ENCODE measurements at regions of chr19 and their contacts with region 1.

Region 1: GRCh38 chr19:58519355-58520256 is at the start of gene ZBTB45:
- DNase-seq: peak; percentile 90
- ATAC-seq: peak; percentile 84
- H3K4me3 ChIP-seq: peak within 1 kb of the TSS; percentile 78 to 94 (median 90)
- H3K27ac ChIP-seq: peak within 1 kb of the TSS; percentile 88
- H3K4me1 ChIP-seq: peaks cover 28% of the 10 kb centered on the region
- H3K27me3 ChIP-seq: no peaks in the 10 kb centered on the region; a peak in 1 of 5 replicates
- CTCF ChIP-seq: peak; percentile 96
- EP300 ChIP-seq: peak in 1 of 2 experiments; percentile 62; a peak in 2 of 4 replicates
- POLR2A ChIP-seq: peak; percentile 64 to 80; a peak in 3 of 4 replicates
- RAD21 ChIP-seq: peak; percentile 86
- total RNA-seq, gene ZBTB45: 2.0 and 3.7 TPM in 2 replicates

Region 2: GRCh38 chr19:58326914-58327726 is 192.5 kb before region 1 on chr19 and contains the start of gene ZSCAN22:
- CTCF ChIA-PET with region 1: interaction called, 4 read pairs
- POLR2A ChIA-PET with region 1: interaction called, 14 read pairs
- in situ Hi-C with region 1: no loop called
- intact Hi-C with region 1: loop called (anchors 5 kb)
- DNase-seq: peak; percentile 93
- ATAC-seq: peak; percentile 95
- H3K4me3 ChIP-seq: peak within 1 kb of the TSS; percentile 83 to 95 (median 89)
- H3K27ac ChIP-seq: peak within 1 kb of the TSS; percentile 78
- H3K4me1 ChIP-seq: peaks cover 41% of the 10 kb centered on the region
- H3K27me3 ChIP-seq: no peaks in the 10 kb centered on the region; a peak in 1 of 5 replicates
- CTCF ChIP-seq: peak; percentile 9; the same call in 1 of the 2 replicates
- EP300 ChIP-seq: peak in 1 of 2 experiments; percentile 40; a peak in 1 of 4 replicates
- POLR2A ChIP-seq: peak; percentile 59 to 75
- RAD21 ChIP-seq: peak; percentile 54; the same call in 1 of the 2 replicates
- total RNA-seq, gene ZSCAN22: 2.5 and 3.1 TPM in 2 replicates

Region 3: GRCh38 chr19:58355908-58356765 is 163.5 kb before region 1 on chr19:
- CTCF ChIA-PET with region 1: no interaction called
- POLR2A ChIA-PET with region 1: no interaction called
- in situ Hi-C with region 1: no loop called
- intact Hi-C with region 1: no loop called
- DNase-seq: no peak
- ATAC-seq: no peak
- H3K4me3 ChIP-seq: no peak overlapping the region
- H3K27ac ChIP-seq: no peak overlapping the region
- H3K4me1 ChIP-seq: peaks cover 41% of the 10 kb centered on the region
- H3K27me3 ChIP-seq: no peaks in the 10 kb centered on the region
- CTCF ChIP-seq: no peak
- EP300 ChIP-seq: no peak
- POLR2A ChIP-seq: no peak
- RAD21 ChIP-seq: no peak

Region 4: GRCh38 chr19:58499021-58499927 is 20.3 kb before region 1 on chr19:
- CTCF ChIA-PET with region 1: no interaction called
- POLR2A ChIA-PET with region 1: interaction called, 44 read pairs
- in situ Hi-C with region 1: no loop called
- intact Hi-C with region 1: loop called (anchors 2 kb)
- DNase-seq: peak; percentile 98
- ATAC-seq: peak; percentile 96
- H3K4me3 ChIP-seq: peak overlapping the region; percentile 60 to 87 (median 77)
- H3K27ac ChIP-seq: peak overlapping the region; percentile 68
- H3K4me1 ChIP-seq: peaks cover 37% of the 10 kb centered on the region
- H3K27me3 ChIP-seq: no peaks in the 10 kb centered on the region; a peak in 1 of 5 replicates
- CTCF ChIP-seq: peak; percentile 67
- EP300 ChIP-seq: peak; percentile 15 to 59; a peak in 1 of 4 replicates
- POLR2A ChIP-seq: peak; percentile 14 to 68
- RAD21 ChIP-seq: peak; percentile 71

Region 5: GRCh38 chr19:58543826-58544590 is 24.4 kb after region 1 on chr19 and contains the start of gene TRIM28:
- CTCF ChIA-PET with region 1: no interaction called
- POLR2A ChIA-PET with region 1: interaction called, 59 read pairs
- in situ Hi-C with region 1: no loop called
- intact Hi-C with region 1: no loop called
- DNase-seq: peak; percentile 96
- ATAC-seq: peak; percentile 92
- H3K4me3 ChIP-seq: peak within 1 kb of the TSS; percentile 91 to 99 (median 96)
- H3K27ac ChIP-seq: peak within 1 kb of the TSS; percentile 80
- H3K4me1 ChIP-seq: peaks cover 24% of the 10 kb centered on the region
- H3K27me3 ChIP-seq: no peaks in the 10 kb centered on the region; a peak in 2 of 5 replicates
- CTCF ChIP-seq: no peak
- EP300 ChIP-seq: no peak; a peak in 1 of 4 replicates
- POLR2A ChIP-seq: peak; percentile 85 to 97
- RAD21 ChIP-seq: no peak; the same call in 1 of the 2 replicates
- total RNA-seq, gene TRIM28: 302 and 361 TPM in 2 replicates

Region 6: GRCh38 chr19:58572818-58573657 is 53.4 kb after region 1 on chr19 and contains the start of gene MZF1:
- CTCF ChIA-PET with region 1: no interaction called
- POLR2A ChIA-PET with region 1: interaction called, 14 read pairs
- in situ Hi-C with region 1: no loop called
- intact Hi-C with region 1: no loop called
- DNase-seq: peak; percentile 99
- ATAC-seq: peak; percentile 74
- H3K4me3 ChIP-seq: peak within 1 kb of the TSS; percentile 80 to 86 (median 82)
- H3K27ac ChIP-seq: peak within 1 kb of the TSS; percentile 93
- H3K4me1 ChIP-seq: peaks cover 24% of the 10 kb centered on the region
- H3K27me3 ChIP-seq: no peaks in the 10 kb centered on the region
- CTCF ChIP-seq: peak; percentile 50
- EP300 ChIP-seq: peak in 1 of 2 experiments; percentile 44; a peak in 1 of 4 replicates
- POLR2A ChIP-seq: peak; percentile 23 to 59; a peak in 2 of 4 replicates
- RAD21 ChIP-seq: no peak; the same call in 1 of the 2 replicates
- total RNA-seq, gene MZF1: 1.3 and 3.1 TPM in 2 replicates